ENCODE measurements at regions of chr2 and their contacts with region 1.

Region 1: GRCh38 chr2:147718831-147719230 is 126.0 kb upstream of the ACVR2A start:
- DNase-seq: no peak
- H3K4me3 ChIP-seq: no peak overlapping the region
- H3K27ac ChIP-seq: no peak overlapping the region
- H3K4me1 ChIP-seq: no peaks in the 10 kb centered on the region
- H3K27me3 ChIP-seq: no peaks in the 10 kb centered on the region
- CTCF ChIP-seq: no peak

Region 2: DNA sequence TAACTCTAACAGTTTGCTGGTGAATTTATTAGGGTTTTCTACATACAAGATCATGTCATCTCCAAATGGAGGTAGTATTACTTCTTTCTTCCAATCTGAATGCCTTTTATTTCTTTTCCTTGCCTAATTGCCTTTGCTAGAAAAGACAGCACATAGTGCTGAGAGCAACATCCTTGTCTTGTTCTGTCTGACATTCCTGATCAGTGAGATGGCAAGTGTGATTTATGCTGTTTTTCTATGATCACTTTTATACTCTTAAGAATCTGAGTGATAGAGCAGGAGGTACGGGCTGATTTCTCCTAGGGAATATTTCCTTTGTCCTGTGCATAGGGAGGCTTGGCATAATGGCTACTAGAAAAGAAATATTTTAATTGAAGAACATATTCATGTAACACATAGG is 1336.9 kb after region 1 on chr2:
- CTCF ChIA-PET with region 1: no interaction called
- POLR2A ChIA-PET with region 1: interaction called, 10 read pairs
- intact Hi-C with region 1: no loop called
- DNase-seq: no peak
- H3K4me3 ChIP-seq: no peak overlapping the region
- H3K27ac ChIP-seq: no peak overlapping the region
- H3K4me1 ChIP-seq: peaks cover 8% of the 10 kb centered on the region; the same call in 1 of the 2 replicates
- H3K27me3 ChIP-seq: no peaks in the 10 kb centered on the region
- CTCF ChIP-seq: no peak